Heart right ventricle (tissue), 16 donors: ENCODE measurements at regions of chr7 and their contacts with region 1.

Region 1: DNA sequence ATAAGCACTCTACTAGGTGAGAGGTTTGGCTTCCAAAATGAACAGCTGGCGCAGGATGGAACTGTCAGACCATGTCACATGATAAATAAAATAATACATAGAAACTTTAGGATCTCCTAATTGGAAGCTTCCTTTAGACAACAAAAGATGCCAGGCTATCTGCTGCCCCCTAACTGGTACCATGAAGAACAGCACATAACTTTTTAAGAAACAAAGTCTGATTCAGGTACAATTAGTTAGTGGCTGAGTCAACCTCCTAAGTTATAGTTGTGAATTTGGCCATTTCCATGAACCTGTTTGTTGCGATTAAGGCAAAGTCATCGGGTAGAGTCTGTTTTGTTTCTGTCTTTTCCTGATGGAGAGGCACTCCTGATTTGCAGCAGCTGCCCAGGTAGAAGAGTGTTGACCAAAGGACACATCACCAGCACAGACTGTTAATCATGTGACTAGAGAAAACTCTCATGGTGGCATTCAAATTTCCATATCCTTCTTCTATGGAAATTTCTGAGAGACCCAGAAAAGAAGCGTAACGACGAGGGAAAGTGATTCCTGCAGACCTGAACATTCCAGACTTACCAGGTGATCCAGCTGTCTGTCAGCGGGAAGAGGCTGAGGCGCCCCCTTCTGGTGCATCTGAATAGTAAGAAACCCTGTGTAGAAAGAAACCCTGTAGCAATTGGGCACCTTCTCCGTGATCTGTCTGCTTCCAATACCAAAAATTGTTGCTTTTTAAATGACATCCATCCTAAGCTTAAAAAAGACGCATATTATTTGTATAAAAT is 8.6 kb upstream of the INHBA start:
- DNase-seq: no peak
- ATAC-seq: no peak
- H3K4me3 ChIP-seq: no peak overlapping the region
- H3K27ac ChIP-seq: no peak overlapping the region
- H3K4me1 ChIP-seq: peaks cover 0 to under 1% (median 0%) of the 10 kb centered on the region in 9 donors
- H3K27me3 ChIP-seq: no peaks in the 10 kb centered on the region
- CTCF ChIP-seq: peak in 7 of 9 donors; percentile 18 to 55 (median 40)

Region 2: GRCh38 chr7:40244226-40244625 is 1467.2 kb before region 1 on chr7:
- intact Hi-C with region 1: loop called in 1 of 10 experiments (anchors 10 kb)
- DNase-seq: no peak
- ATAC-seq: no peak
- H3K4me3 ChIP-seq: no peak overlapping the region
- H3K27ac ChIP-seq: no peak overlapping the region
- H3K4me1 ChIP-seq: no peaks in the 10 kb centered on the region
- H3K27me3 ChIP-seq: no peaks in the 10 kb centered on the region
- CTCF ChIP-seq: no peak

Region 3: GRCh38 chr7:41010418-41010817 is 701.1 kb before region 1 on chr7:
- intact Hi-C with region 1: loop called in 3 of 10 experiments (anchors 10 kb)
- DNase-seq: peak in 1 of 2 donors; percentile 25
- ATAC-seq: peak in 7 of 8 donors; percentile 43 to 79 (median 68)
- H3K4me3 ChIP-seq: no peak overlapping the region
- H3K27ac ChIP-seq: peak overlapping the region in 8 of 10 donors; percentile 9 to 68 (median 52)
- H3K4me1 ChIP-seq: peaks cover 0 to 42% (median 16%) of the 10 kb centered on the region in 9 donors
- H3K27me3 ChIP-seq: no peaks in the 10 kb centered on the region
- CTCF ChIP-seq: peak in 2 of 9 donors; percentile 7 to 13